PC-9 (cell line): ENCODE measurements at regions of chr1 and their contacts with region 1.

Region 1: DNA sequence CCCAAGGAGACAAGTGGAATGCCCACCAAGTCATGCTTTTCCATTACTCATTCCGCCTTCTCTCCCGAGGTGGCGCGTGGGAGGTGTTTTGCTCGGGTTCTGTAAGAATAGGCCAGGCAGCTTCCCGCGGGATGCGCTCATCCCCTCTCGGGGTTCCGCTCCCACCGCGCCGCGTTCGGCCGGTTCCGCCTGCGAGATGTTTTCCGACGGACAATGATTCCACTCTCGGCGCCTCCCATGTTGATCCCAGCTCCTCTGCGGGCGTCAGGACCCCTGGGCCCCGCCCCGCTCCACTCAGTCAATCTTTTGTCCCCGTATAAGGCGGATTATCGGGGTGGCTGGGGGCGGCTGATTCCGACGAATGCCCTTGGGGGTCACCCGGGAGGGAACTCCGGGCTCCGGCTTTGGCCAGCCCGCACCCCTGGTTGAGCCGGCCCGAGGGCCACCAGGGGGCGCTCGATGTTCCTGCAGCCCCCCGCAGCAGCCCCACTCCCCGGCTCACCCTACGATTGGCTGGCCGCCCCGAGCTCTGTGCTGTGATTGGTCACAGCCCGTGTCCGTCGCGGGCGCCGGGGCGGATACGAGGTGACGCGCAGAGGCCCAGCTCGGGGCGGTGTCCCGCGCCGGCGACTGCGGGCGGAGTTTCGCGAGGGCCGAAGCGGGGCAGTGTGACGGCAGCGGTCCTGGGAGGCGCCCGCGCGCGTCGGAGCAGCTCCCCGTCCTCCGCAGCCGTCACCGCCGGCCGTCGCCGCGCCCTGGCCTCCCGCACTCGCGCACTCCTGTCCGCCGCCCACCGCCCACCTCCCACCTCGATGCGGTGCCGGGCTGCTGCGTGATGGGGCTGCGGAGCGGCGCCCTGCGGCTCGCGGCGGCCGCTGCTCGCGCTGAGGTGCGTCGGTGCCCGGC is at the start of gene KIF1B:
- DNase-seq: peak; percentile 80 to 98
- H3K4me3 ChIP-seq: peak within 1 kb of the TSS; percentile 88
- H3K27ac ChIP-seq: peak within 1 kb of the TSS; percentile 45
- H3K4me1 ChIP-seq: peaks cover 11% of the 10 kb centered on the region
- H3K27me3 ChIP-seq: no peaks in the 10 kb centered on the region
- CTCF ChIP-seq: peak; percentile 88
- total RNA-seq, gene KIF1B: 20.6 and 22.7 TPM in 2 replicates

Region 2: GRCh38 chr1:10253755-10254154 is 43.6 kb after region 1 on chr1:
- CTCF ChIA-PET with region 1: interaction called, 23 read pairs
- POLR2A ChIA-PET with region 1: no interaction called
- intact Hi-C with region 1: no loop called
- DNase-seq: peak in 1 of 2 experiments; percentile 3
- H3K4me3 ChIP-seq: no peak overlapping the region
- H3K27ac ChIP-seq: no peak overlapping the region
- H3K4me1 ChIP-seq: no peaks in the 10 kb centered on the region
- H3K27me3 ChIP-seq: no peaks in the 10 kb centered on the region
- CTCF ChIP-seq: no peak

Region 3: DNA sequence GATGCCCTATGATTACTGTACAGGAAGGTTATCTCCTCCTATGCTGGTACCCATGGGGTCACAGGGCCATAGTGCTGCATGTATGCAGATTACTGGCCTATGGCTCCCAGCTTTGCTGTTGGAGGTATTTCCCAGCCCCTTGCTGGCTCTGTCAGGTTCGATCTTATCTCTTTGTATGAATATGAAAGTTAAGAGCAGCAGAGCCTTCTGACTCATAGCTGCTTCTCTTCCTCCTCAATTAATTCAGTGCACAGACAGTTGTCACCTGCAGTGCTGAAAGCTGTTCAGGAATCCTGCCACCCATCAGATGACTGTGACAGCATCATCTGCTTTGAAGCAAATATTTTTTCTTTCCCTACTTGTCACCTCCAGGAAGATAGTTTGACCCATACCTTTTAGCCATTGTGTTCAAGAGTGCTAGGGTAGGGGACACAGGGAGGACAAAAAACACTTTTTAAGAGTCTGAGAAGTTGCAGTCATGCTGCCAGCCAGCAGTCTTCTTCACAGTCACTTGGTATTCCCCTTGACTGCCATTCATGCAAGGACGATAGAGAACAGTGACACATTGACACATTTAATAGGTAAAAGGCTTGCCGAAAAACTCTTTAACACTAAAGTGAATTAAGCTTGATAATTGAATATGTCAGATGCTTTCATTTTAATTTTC is 73.3 kb after region 1 on chr1:
- CTCF ChIA-PET with region 1: interaction called, 8 read pairs
- POLR2A ChIA-PET with region 1: no interaction called
- intact Hi-C with region 1: loop called (anchors 2 kb)
- DNase-seq: peak; percentile 48 to 50
- H3K4me3 ChIP-seq: no peak overlapping the region
- H3K27ac ChIP-seq: no peak overlapping the region
- H3K4me1 ChIP-seq: no peaks in the 10 kb centered on the region
- H3K27me3 ChIP-seq: no peaks in the 10 kb centered on the region
- CTCF ChIP-seq: no peak

Region 4: DNA sequence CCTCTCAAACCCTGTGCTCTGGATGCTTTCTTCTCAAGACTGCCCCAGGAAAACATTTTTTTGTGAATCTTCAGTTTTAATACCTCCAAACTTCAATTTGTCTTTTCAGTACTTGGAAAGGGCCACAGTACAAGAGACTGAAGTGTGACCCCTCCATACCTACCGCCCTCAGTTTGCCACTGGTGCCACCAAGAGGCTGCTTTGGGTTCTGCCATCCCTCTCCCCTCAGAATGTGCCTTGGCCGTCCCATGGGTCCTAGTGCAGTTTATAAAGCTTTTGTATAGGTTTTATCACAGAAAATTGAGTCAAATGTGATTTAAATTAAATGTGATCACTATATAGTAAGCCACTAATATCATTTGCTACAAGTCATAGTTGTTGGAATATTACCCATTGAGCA is 127.9 kb after region 1 on chr1:
- CTCF ChIA-PET with region 1: interaction called, 4 read pairs
- POLR2A ChIA-PET with region 1: interaction called, 8 read pairs
- intact Hi-C with region 1: loop called (anchors 2 kb)
- DNase-seq: peak in 1 of 2 experiments; percentile 18
- H3K4me3 ChIP-seq: no peak overlapping the region
- H3K27ac ChIP-seq: no peak overlapping the region
- H3K4me1 ChIP-seq: 0 out of 2 replicates have a peak, but pooled peaks cover 17% of the 10 kb centered on the region
- H3K27me3 ChIP-seq: no peaks in the 10 kb centered on the region
- CTCF ChIP-seq: peak; percentile 64

Region 5: GRCh38 chr1:10803971-10804820 is 594.0 kb after region 1 on chr1:
- CTCF ChIA-PET with region 1: interaction called, 10 read pairs
- POLR2A ChIA-PET with region 1: no interaction called
- intact Hi-C with region 1: no loop called
- DNase-seq: peak; percentile 68 to 80
- H3K4me3 ChIP-seq: peak overlapping the region; percentile 50; the same call in 1 of the 2 replicates
- H3K27ac ChIP-seq: peak overlapping the region; percentile 71
- H3K4me1 ChIP-seq: peaks cover 14% of the 10 kb centered on the region
- H3K27me3 ChIP-seq: no peaks in the 10 kb centered on the region
- CTCF ChIP-seq: no peak